ENCODE measurements at regions of chr9 and their contacts with region 1.

Region 1: DNA sequence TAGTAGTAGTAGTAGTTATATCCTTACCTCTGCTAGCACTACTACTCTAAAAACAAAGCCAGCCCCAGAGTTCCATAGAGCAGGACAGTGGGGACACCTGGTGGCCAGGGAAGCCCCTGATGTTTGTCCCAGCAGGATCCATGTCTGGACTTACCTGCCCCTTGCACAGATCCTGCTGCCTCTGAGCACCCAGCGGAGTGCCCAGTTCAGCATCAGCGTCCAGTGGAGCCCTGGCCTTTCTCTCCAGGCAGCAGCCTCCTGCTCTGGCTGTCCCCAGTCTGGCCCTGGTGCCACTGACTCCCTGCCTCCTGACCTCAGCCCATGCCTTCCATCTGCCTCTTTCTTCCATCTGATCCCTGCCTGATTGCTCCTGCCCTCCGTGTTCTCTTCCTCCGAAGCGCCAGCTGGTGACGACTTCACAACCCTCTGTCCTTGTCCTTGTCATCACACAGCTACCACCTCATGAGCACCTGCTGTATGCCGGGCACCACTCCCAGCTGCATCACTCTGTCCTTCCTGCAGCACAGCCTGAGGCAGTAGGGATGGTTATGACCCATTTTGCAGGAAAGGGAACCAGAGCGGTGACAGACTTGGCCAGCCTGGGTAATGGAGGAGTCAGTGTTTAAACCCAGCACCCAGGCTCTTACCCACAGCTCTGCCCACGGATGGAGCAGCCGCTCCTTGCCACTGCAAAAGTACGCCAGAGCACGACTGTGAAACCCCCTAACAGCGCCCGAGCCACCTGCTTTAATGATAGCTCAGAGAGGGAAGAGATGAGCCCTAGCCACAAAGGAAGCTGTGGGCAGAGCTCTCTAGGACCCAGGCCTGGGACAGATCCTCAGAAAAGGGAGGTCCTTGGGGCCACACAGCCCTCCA is 11.5 kb downstream of the SARDH start:
- DNase-seq: peak; percentile 63
- ATAC-seq: peak; percentile 86
- H3K4me3 ChIP-seq: no peak overlapping the region
- H3K27ac ChIP-seq: no peak overlapping the region
- H3K4me1 ChIP-seq: no peaks in the 10 kb centered on the region
- H3K27me3 ChIP-seq: no peaks in the 10 kb centered on the region
- CTCF ChIP-seq: peak; percentile 48

Region 2: DNA sequence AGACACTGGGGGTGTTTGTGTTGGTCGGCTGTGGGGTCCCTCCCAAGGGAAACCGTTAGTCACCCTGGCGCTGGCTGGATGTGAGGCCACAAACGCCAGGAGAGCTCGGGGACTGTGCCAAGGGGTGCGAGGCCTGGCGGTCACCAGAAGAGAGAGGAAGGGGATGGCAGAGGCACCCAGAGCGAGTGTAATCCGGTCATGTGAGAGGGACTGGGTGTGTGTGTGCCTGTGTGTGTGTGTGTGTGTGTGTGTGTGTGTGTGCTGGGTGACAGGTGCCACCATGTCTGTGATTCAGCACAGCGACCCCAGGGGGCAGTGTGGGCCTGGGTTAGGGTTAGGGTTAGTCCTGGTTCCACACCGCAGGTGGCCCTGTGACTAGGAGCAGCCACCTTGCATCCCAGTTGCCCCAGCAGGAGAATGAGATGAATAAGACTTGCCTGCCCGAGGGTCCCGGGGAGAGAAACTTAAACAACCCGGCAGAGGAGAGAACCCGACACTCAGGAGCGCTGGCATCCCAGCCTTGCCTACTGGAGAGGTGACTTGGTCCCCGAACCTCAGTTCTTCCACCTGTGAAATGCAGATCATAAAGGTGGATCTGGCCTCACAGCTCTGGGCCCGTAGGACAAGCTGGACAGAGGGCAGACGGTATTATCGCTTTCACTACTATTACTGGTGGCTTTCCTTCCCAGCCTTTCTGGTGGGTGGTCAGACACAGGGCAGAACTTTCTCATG is 193.5 kb before region 1 on chr9:
- CTCF ChIA-PET with region 1: no interaction called
- POLR2A ChIA-PET with region 1: no interaction called
- intact Hi-C with region 1: loop called (anchors 2 kb)
- DNase-seq: peak; percentile 57
- ATAC-seq: peak; percentile 50
- H3K4me3 ChIP-seq: no peak overlapping the region
- H3K27ac ChIP-seq: no peak overlapping the region
- H3K4me1 ChIP-seq: no peaks in the 10 kb centered on the region
- H3K27me3 ChIP-seq: peaks cover 17% of the 10 kb centered on the region
- CTCF ChIP-seq: peak; percentile 60

Measured in PC-3 (cell line).